Esophagus squamous epithelium (tissue), 5 donors: ENCODE measurements at regions of chr2 and their contacts with region 1.

Region 1: GRCh38 chr2:189466660-189467059 is 25.4 kb downstream of the WDR75 start:
- DNase-seq: no peak
- H3K4me3 ChIP-seq: no peak overlapping the region
- H3K27ac ChIP-seq: no peak overlapping the region
- H3K4me1 ChIP-seq: no peaks in the 10 kb centered on the region
- H3K27me3 ChIP-seq: no peaks in the 10 kb centered on the region
- CTCF ChIP-seq: peak; percentile 29 to 60 (median 44)
- POLR2A ChIP-seq: no peak

Region 2: DNA sequence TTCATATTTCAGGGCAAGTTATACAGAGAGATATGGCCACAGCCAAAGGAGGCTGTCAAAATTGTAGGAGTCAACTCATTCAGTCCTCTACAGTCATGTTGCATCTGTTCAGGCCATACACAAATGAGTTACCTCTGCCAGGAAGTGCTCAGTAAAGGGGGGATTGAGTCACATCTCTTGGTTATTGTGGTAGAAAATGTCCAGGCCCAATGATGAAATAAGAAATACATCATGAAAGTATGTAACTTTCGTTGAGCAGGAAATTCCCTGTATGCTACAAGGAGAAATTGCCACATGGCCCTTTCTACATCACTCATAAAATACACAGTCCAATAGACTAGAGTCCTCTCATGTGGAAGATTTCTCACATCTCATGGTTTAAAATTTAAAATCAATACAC is 596.4 kb before region 1 on chr2:
- intact Hi-C with region 1: no loop called
- DNase-seq: no peak
- H3K4me3 ChIP-seq: no peak overlapping the region
- H3K27ac ChIP-seq: no peak overlapping the region
- H3K4me1 ChIP-seq: peaks cover 0 to 3% (median 0%) of the 10 kb centered on the region in 3 donors
- H3K27me3 ChIP-seq: no peaks in the 10 kb centered on the region
- CTCF ChIP-seq: no peak
- POLR2A ChIP-seq: no peak

Region 3: GRCh38 chr2:189633392-189633811 is 166.7 kb after region 1 on chr2:
- intact Hi-C with region 1: loop called (anchors 10 kb)
- DNase-seq: no peak
- H3K4me3 ChIP-seq: no peak overlapping the region
- H3K27ac ChIP-seq: no peak overlapping the region
- H3K4me1 ChIP-seq: peaks cover 0 to 10% (median 4%) of the 10 kb centered on the region in 3 donors
- H3K27me3 ChIP-seq: no peaks in the 10 kb centered on the region
- CTCF ChIP-seq: peak in 5 of 6 experiments; percentile 14 to 46 (median 26)
- POLR2A ChIP-seq: no peak